ENCODE measurements at regions of chr6 and their contacts with region 1.

Region 1: GRCh38 chr6:132750455-132751248 is 7.1 kb downstream of the VNN2 start:
- DNase-seq: no peak
- H3K4me3 ChIP-seq: no peak overlapping the region
- H3K27ac ChIP-seq: no peak overlapping the region
- H3K4me1 ChIP-seq: no peaks in the 10 kb centered on the region
- H3K27me3 ChIP-seq: no peaks in the 10 kb centered on the region
- CTCF ChIP-seq: no peak

Region 2: GRCh38 chr6:132330779-132331178 is 419.9 kb before region 1 on chr6:
- CTCF ChIA-PET with region 1: interaction called, 14 read pairs
- POLR2A ChIA-PET with region 1: no interaction called
- intact Hi-C with region 1: no loop called
- DNase-seq: peak in 1 of 2 experiments; percentile 58
- H3K4me3 ChIP-seq: no peak overlapping the region
- H3K27ac ChIP-seq: peak overlapping the region; percentile 5; the same call in 1 of the 2 replicates
- H3K4me1 ChIP-seq: peaks cover 32% of the 10 kb centered on the region
- H3K27me3 ChIP-seq: no peaks in the 10 kb centered on the region
- CTCF ChIP-seq: no peak

Region 3: GRCh38 chr6:132669690-132670291 is 80.9 kb before region 1 on chr6:
- CTCF ChIA-PET with region 1: no interaction called
- POLR2A ChIA-PET with region 1: no interaction called
- intact Hi-C with region 1: no loop called
- DNase-seq: peak; percentile 19 to 63
- H3K4me3 ChIP-seq: no peak overlapping the region
- H3K27ac ChIP-seq: no peak overlapping the region
- H3K4me1 ChIP-seq: peaks cover 28% of the 10 kb centered on the region
- H3K27me3 ChIP-seq: no peaks in the 10 kb centered on the region
- CTCF ChIP-seq: peak; percentile 84

Region 4: GRCh38 chr6:132693478-132693877 is 57.2 kb before region 1 on chr6:
- CTCF ChIA-PET with region 1: no interaction called
- POLR2A ChIA-PET with region 1: interaction called, 10 read pairs
- intact Hi-C with region 1: no loop called
- DNase-seq: no peak
- H3K4me3 ChIP-seq: no peak overlapping the region
- H3K27ac ChIP-seq: no peak overlapping the region
- H3K4me1 ChIP-seq: no peaks in the 10 kb centered on the region
- H3K27me3 ChIP-seq: no peaks in the 10 kb centered on the region
- CTCF ChIP-seq: no peak